ENCODE measurements at regions of chr10 and their contacts with region 1.

Region 1: DNA sequence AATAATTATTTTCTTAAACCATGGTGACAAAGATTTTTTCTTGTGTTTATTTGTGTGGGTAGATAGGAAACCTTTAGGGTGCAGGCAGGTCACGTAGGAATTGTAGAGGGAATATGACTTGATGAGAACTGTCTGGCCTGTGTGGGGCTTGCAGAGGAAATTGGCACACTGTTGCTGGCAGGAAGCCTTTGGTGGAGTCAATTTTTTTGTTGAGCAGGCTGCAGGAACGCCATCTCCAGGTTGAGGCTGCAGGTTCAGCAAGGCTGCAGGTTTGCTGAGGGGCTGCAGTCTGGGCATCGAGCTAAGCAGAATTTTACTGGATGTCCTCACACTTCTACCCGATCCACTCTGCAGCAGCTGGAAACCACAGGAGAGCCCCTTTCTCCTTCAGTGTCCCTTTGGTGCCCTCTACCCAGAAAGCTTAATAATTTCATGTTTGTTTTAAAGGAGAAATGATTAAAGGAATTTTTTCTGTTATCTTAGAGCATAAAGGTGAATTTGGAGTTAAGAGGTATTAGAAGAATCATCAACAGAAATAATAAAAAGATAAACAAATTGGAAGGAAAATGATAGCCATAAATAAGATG is 37.0 kb downstream of the TBC1D12 start:
- DNase-seq: peak; percentile 28
- H3K4me3 Mint-ChIP-seq: no peak overlapping the region
- H3K27ac Mint-ChIP-seq: no peak overlapping the region
- H3K4me1 Mint-ChIP-seq: no peaks in the 10 kb centered on the region
- H3K27me3 Mint-ChIP-seq: no peaks in the 10 kb centered on the region
- CTCF ChIP-seq: no peak

Region 2: DNA sequence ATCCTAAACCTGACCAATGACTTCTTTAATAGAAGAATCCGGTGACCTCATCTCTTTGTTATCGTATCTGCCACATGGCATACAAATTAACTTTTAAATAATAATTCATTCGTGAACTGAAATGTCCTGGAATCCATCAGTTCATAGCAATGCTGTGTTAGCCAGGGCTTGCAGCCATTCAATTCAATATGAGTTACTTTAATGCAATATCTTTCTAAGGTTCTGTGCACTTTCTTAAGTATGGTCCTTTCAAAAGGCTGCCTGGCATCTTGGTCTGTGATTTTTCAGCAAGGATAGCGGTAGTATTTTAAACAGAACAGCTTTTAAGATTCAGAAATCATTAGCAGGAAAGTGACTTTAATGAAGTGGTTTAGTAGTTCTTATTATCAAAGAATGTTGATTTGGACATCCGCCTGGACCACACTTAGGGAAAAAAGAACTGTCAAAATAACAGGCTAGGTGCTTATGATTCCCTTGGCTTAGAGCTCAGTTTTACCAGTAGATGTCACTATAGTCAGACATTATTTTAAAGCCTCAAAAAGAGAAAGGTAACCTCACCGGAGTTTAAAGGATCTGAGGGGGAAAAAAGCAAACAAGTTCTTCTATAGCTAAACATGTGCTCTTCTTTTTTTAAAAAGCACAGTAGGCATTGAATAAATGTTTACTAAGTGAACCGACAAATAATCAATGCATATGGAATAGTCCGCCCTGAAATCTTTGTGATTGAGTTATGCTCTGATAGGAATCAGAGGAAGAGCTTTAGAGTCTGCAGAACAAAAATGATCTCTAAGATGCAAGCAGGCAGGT is 522.9 kb before region 1 on chr10:
- CTCF ChIA-PET with region 1: interaction called, 17 read pairs
- POLR2A ChIA-PET with region 1: no interaction called
- intact Hi-C with region 1: loop called (anchors 1 kb)
- DNase-seq: peak; percentile 43
- H3K4me3 Mint-ChIP-seq: no peak overlapping the region
- H3K27ac Mint-ChIP-seq: no peak overlapping the region
- H3K4me1 Mint-ChIP-seq: no peaks in the 10 kb centered on the region
- H3K27me3 Mint-ChIP-seq: no peaks in the 10 kb centered on the region
- CTCF ChIP-seq: peak; percentile 46

Region 3: GRCh38 chr10:94320285-94320914 is 119.0 kb before region 1 on chr10:
- CTCF ChIA-PET with region 1: interaction called, 21 read pairs
- POLR2A ChIA-PET with region 1: no interaction called
- intact Hi-C with region 1: loop called (anchors 1 kb)
- DNase-seq: peak; percentile 76
- H3K4me3 Mint-ChIP-seq: no peak overlapping the region
- H3K27ac Mint-ChIP-seq: no peak overlapping the region
- H3K4me1 Mint-ChIP-seq: no peaks in the 10 kb centered on the region
- H3K27me3 Mint-ChIP-seq: no peaks in the 10 kb centered on the region
- CTCF ChIP-seq: peak; percentile 79

Region 4: DNA sequence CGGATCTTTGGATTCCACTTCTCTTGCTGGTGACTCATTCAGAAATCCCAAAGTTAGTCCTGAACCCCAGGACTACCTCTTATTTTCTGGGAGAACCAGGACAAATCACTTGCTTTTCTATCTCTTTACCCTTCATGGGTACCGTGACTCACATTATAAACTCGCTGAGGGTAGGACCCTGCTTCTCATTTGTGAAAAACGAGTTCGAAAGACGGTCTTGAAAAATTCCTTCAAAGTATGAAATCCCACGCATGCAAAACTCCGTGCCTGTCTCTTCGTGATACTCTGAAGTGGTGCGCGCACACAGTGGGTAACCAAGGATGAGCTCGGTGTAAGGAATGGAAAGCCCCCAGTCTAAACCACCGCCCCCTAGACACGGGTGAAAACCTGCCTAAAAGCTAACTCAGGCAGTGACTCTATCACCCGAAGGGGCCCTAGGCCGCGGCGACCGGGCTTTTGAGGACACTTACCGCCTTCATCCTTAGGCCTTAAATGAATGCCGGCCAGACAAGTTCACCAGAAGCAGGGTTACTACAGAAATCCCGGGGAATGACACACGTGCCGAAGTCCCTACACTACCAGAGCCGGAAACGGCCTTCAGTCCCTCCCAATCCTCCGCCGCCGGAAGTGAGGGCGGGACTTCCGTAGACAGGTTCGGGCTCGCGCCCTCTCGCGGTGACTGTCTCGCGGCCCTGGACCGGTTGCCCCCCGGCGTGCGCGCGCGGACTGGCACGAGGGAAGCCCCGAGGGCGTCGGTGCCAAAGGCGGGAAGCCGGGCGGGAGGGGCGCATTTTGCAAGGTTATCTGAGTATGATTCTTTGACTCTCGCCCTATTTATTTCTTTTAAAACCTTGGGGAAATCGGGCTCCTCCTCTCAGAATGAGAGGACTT is 76.8 kb before region 1 on chr10 and contains the start of gene NOC3L:
- CTCF ChIA-PET with region 1: interaction called, 50 read pairs
- POLR2A ChIA-PET with region 1: interaction called, 20 read pairs
- intact Hi-C with region 1: loop called (anchors 5 kb)
- DNase-seq: peak; percentile 95
- H3K4me3 Mint-ChIP-seq: peak within 1 kb of the TSS; percentile 95
- H3K27ac Mint-ChIP-seq: peak within 1 kb of the TSS; percentile 92
- H3K4me1 Mint-ChIP-seq: peaks cover 24% of the 10 kb centered on the region
- H3K27me3 Mint-ChIP-seq: no peaks in the 10 kb centered on the region
- CTCF ChIP-seq: peak; percentile 78
- total RNA-seq, gene NOC3L: 24.9 and 39.0 TPM in 2 replicates

Region 5: DNA sequence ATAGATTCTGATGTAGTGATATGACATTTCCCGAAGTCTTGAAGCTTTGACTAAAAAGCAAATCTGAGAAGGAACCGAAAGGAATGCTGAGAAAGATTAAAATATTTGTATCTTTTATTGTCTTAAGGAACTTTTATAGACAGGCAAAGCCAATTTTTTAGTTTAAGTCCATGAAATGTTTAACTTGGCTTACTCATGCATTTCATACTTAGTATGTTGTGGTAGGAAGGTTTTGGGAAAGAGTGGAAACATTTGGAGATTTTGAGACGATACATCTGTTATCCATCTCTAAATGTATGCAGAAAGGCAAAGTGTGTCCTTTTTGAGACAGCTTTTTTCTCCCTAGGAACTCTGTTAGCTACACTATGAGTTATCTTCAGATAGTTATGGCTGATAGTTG is 26.9 kb before region 1 on chr10:
- CTCF ChIA-PET with region 1: interaction called, 17 read pairs
- POLR2A ChIA-PET with region 1: interaction called, 3 read pairs
- intact Hi-C with region 1: no loop called
- DNase-seq: no peak
- H3K4me3 Mint-ChIP-seq: no peak overlapping the region
- H3K27ac Mint-ChIP-seq: no peak overlapping the region
- H3K4me1 Mint-ChIP-seq: peaks cover 13% of the 10 kb centered on the region
- H3K27me3 Mint-ChIP-seq: no peaks in the 10 kb centered on the region
- CTCF ChIP-seq: no peak

Region 6: GRCh38 chr10:94429049-94429707 is 10.2 kb before region 1 on chr10:
- CTCF ChIA-PET with region 1: interaction called, 27 read pairs
- POLR2A ChIA-PET with region 1: interaction called, 4 read pairs
- intact Hi-C with region 1: no loop called
- DNase-seq: no peak
- H3K4me3 Mint-ChIP-seq: no peak overlapping the region
- H3K27ac Mint-ChIP-seq: no peak overlapping the region
- H3K4me1 Mint-ChIP-seq: peaks cover 6% of the 10 kb centered on the region
- H3K27me3 Mint-ChIP-seq: no peaks in the 10 kb centered on the region
- CTCF ChIP-seq: no peak

Region 7: GRCh38 chr10:94623572-94623971 is 184.2 kb after region 1 on chr10:
- CTCF ChIA-PET with region 1: no interaction called
- POLR2A ChIA-PET with region 1: no interaction called
- intact Hi-C with region 1: no loop called
- DNase-seq: no peak
- H3K4me3 Mint-ChIP-seq: no peak overlapping the region
- H3K27ac Mint-ChIP-seq: no peak overlapping the region
- H3K4me1 Mint-ChIP-seq: no peaks in the 10 kb centered on the region
- H3K27me3 Mint-ChIP-seq: no peaks in the 10 kb centered on the region
- CTCF ChIP-seq: no peak